Activated B cell treated with CpG ODN at 0.5 μM for 24 hours (primary cell): ENCODE measurements at regions of chr10 and their contacts with region 1.

Region 1: DNA sequence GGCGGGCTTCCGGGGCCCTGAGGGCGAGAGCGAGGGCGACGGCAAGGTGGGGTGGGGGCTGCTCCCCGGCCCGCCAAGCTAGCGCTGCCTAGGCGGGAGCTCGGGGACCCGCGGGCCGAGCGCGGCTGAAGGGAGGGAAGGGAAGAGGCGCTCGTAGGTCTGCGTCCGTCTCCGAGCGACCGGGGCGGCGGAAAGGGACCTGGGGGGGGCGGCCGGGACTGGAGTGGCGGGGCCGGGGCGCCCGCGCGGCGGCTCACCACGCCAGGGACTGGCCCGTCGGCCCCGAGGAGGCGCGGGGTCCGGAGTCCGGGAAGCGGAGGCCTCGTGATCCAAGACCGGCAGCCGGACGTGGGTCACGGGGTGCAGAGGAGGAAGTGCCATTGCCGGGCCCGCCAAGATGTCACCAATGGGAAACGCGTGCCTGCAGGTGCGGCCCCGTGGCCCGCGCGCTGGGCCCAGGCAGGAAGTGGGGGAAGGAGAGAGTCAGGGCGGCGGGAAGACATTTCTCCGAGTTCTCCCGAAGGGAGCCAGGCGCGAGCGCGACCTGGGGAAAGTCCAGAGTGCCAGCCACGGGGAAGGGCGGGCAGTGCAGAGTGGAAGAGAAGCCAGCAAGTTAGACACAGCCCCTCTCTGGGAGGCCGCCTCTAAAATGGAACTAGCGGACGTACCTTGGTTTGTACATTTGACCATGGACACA is 11.9 kb downstream of the HNRNPF start:
- DNase-seq: peak; percentile 77
- ATAC-seq: peak; percentile 79
- H3K4me3 Mint-ChIP-seq: peak overlapping the region; percentile 89
- H3K27ac Mint-ChIP-seq: peak overlapping the region; percentile 93
- H3K4me1 Mint-ChIP-seq: peaks cover 82% of the 10 kb centered on the region
- H3K27me3 Mint-ChIP-seq: no peaks in the 10 kb centered on the region
- CTCF ChIP-seq: no peak

Region 2: GRCh38 chr10:42883993-42884983 is 512.8 kb before region 1 on chr10:
- CTCF ChIA-PET with region 1: no interaction called
- POLR2A ChIA-PET with region 1: no interaction called
- intact Hi-C with region 1: no loop called
- DNase-seq: no peak
- ATAC-seq: no peak
- H3K4me3 Mint-ChIP-seq: no peak overlapping the region
- H3K27ac Mint-ChIP-seq: no peak overlapping the region
- H3K4me1 Mint-ChIP-seq: no peaks in the 10 kb centered on the region
- H3K27me3 Mint-ChIP-seq: no peaks in the 10 kb centered on the region
- CTCF ChIP-seq: no peak

Region 3: GRCh38 chr10:43292755-43293676 is 104.1 kb before region 1 on chr10:
- CTCF ChIA-PET with region 1: no interaction called
- POLR2A ChIA-PET with region 1: no interaction called
- intact Hi-C with region 1: loop called (anchors 5 kb)
- DNase-seq: no peak
- ATAC-seq: peak; percentile 66
- H3K4me3 Mint-ChIP-seq: no peak overlapping the region
- H3K27ac Mint-ChIP-seq: no peak overlapping the region
- H3K4me1 Mint-ChIP-seq: peaks cover 6% of the 10 kb centered on the region
- H3K27me3 Mint-ChIP-seq: peaks cover 7% of the 10 kb centered on the region
- CTCF ChIP-seq: no peak

Region 4: GRCh38 chr10:43361986-43362839 is 34.9 kb before region 1 on chr10:
- CTCF ChIA-PET with region 1: no interaction called
- POLR2A ChIA-PET with region 1: interaction called, 7 read pairs
- intact Hi-C with region 1: loop called (anchors 1 kb)
- DNase-seq: peak; percentile 86
- ATAC-seq: peak; percentile 98
- H3K4me3 Mint-ChIP-seq: peak overlapping the region; percentile 97
- H3K27ac Mint-ChIP-seq: peak overlapping the region; percentile 93
- H3K4me1 Mint-ChIP-seq: peaks cover 23% of the 10 kb centered on the region
- H3K27me3 Mint-ChIP-seq: no peaks in the 10 kb centered on the region
- CTCF ChIP-seq: no peak

Region 5: GRCh38 chr10:43380610-43381222 is 16.4 kb before region 1 on chr10:
- CTCF ChIA-PET with region 1: no interaction called
- POLR2A ChIA-PET with region 1: no interaction called
- intact Hi-C with region 1: no loop called
- DNase-seq: no peak
- ATAC-seq: no peak
- H3K4me3 Mint-ChIP-seq: no peak overlapping the region
- H3K27ac Mint-ChIP-seq: no peak overlapping the region
- H3K4me1 Mint-ChIP-seq: no peaks in the 10 kb centered on the region
- H3K27me3 Mint-ChIP-seq: no peaks in the 10 kb centered on the region
- CTCF ChIP-seq: no peak

Region 6: GRCh38 chr10:43420369-43421200 is 23.5 kb after region 1 on chr10:
- CTCF ChIA-PET with region 1: no interaction called
- POLR2A ChIA-PET with region 1: interaction called, 8 read pairs
- intact Hi-C with region 1: loop called (anchors 1 kb)
- DNase-seq: peak; percentile 73
- ATAC-seq: peak; percentile 83
- H3K4me3 Mint-ChIP-seq: peak overlapping the region; percentile 88
- H3K27ac Mint-ChIP-seq: peak overlapping the region; percentile 94
- H3K4me1 Mint-ChIP-seq: peaks cover 36% of the 10 kb centered on the region
- H3K27me3 Mint-ChIP-seq: no peaks in the 10 kb centered on the region
- CTCF ChIP-seq: no peak

Region 7: DNA sequence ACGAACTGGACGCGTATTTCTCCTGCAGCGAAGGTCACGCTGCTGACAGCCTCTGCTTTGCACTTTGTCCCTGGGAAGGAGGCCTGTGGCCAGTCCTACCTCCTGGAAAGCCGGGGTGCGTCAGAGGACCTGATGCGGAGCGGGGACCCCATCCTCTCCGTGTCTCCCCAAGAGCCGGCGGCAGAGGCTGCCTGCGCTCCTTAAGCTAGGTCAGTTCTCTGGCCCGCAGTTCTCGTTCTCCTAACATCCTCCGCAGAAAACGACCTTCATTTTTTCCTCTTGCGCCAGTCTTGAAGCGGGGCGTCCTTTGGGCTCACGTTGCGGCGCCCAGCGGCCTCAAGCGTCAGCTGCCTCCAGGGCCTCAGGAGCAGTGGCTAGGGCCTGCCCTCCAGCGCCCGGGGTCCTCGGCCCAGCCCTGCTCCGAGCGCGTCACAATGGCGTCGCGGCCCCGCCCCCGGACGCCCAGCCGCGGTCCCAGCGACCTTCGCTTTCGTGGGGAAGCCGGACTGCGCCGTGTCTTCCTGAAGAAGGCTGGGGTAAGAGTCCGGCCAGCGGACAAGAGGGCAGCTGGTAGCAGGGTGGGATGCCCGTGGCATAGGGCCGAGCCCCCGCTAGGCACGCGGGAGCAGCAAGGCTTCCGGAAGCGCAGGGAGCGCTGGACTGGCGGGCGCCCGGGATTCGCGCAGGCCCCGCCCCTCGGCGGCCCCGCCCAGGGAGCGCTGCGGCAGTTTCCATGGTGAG is 39.5 kb after region 1 on chr10 and contains the start of gene ZNF487:
- CTCF ChIA-PET with region 1: no interaction called
- POLR2A ChIA-PET with region 1: interaction called, 15 read pairs
- intact Hi-C with region 1: loop called (anchors 1 kb)
- DNase-seq: peak; percentile 97
- ATAC-seq: peak; percentile 90
- H3K4me3 Mint-ChIP-seq: peak within 1 kb of the TSS; percentile 91
- H3K27ac Mint-ChIP-seq: peak within 1 kb of the TSS; percentile 95
- H3K4me1 Mint-ChIP-seq: peaks cover 34% of the 10 kb centered on the region
- H3K27me3 Mint-ChIP-seq: no peaks in the 10 kb centered on the region
- CTCF ChIP-seq: no peak
- total RNA-seq, gene ZNF487: 2.9 and 3.4 TPM in 2 replicates

Region 8: DNA sequence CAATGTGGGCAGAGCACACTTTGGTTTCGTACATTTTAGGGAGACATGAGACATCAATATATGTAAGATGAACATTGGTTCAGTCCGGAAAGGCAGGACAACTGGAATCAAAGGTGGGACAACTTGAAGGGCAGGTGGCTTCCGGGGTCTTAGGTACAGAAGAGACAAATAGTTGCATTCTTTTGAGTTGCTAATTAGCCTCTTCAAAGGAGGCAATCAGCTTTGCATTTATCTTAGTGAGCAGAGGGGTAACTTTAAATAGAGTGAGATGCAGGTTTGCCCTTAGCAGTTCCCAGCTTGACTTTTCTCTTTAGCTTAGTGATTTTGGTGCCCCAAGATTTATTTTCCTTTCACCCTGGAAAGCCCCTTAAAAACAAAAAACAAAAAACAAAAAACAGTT is 61.2 kb after region 1 on chr10:
- CTCF ChIA-PET with region 1: no interaction called
- POLR2A ChIA-PET with region 1: no interaction called
- intact Hi-C with region 1: no loop called
- DNase-seq: no peak
- ATAC-seq: no peak
- H3K4me3 Mint-ChIP-seq: no peak overlapping the region
- H3K27ac Mint-ChIP-seq: no peak overlapping the region
- H3K4me1 Mint-ChIP-seq: peaks cover 30% of the 10 kb centered on the region
- H3K27me3 Mint-ChIP-seq: no peaks in the 10 kb centered on the region
- CTCF ChIP-seq: no peak

Region 9: GRCh38 chr10:43479275-43479674 is 82.2 kb after region 1 on chr10:
- CTCF ChIA-PET with region 1: no interaction called
- POLR2A ChIA-PET with region 1: no interaction called
- intact Hi-C with region 1: no loop called
- DNase-seq: no peak
- ATAC-seq: no peak
- H3K4me3 Mint-ChIP-seq: no peak overlapping the region
- H3K27ac Mint-ChIP-seq: no peak overlapping the region
- H3K4me1 Mint-ChIP-seq: no peaks in the 10 kb centered on the region
- H3K27me3 Mint-ChIP-seq: no peaks in the 10 kb centered on the region
- CTCF ChIP-seq: no peak